IMR-90 (cell line): ENCODE measurements at regions of chrX and their contacts with region 1.

Region 1: GRCh38 chrX:141467442-141467841 is 117.1 kb downstream of the SPANXA1 start:
- DNase-seq: peak; percentile 6
- ATAC-seq: no peak
- H3K4me3 ChIP-seq: no peak overlapping the region
- H3K27ac ChIP-seq: no peak overlapping the region
- H3K4me1 ChIP-seq: peaks cover 2% of the 10 kb centered on the region; the same call in 1 of the 2 replicates
- H3K27me3 ChIP-seq: no peaks in the 10 kb centered on the region
- CTCF ChIP-seq: no peak
- POLR2A ChIP-seq: no peak
- RAD21 ChIP-seq: no peak

Region 2: DNA sequence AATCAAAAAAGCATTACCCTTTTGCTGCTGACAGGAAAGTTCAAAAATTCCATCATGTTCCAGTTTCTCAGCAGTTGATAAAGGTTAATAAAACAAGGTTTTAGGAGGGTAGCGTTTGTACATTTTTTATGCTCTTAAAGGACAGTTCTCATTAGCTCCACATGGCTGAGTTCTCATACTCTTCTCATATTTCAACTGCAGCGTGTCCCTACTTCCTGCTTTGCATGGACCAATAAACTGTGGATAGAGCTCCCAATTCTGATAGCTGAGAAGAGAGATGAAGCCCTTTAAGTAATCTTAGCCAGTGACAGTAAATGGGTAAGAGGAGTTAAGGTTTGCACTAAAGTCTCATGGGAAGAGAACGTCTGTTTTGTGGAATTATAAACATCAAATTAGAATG is 175.5 kb after region 1 on chrX:
- CTCF ChIA-PET with region 1: no interaction called
- POLR2A ChIA-PET with region 1: no interaction called
- dilution Hi-C with region 1: no loop called
- in situ Hi-C with region 1: loop called (anchors 25 kb)
- intact Hi-C with region 1: no loop called
- DNase-seq: peak; percentile 15
- ATAC-seq: peak; percentile 44; the same call in 1 of the 2 replicates
- H3K4me3 ChIP-seq: no peak overlapping the region
- H3K27ac ChIP-seq: no peak overlapping the region
- H3K4me1 ChIP-seq: no peaks in the 10 kb centered on the region
- H3K27me3 ChIP-seq: no peaks in the 10 kb centered on the region
- CTCF ChIP-seq: no peak
- POLR2A ChIP-seq: no peak
- RAD21 ChIP-seq: no peak